Heart left ventricle (tissue), 16 donors: ENCODE measurements at regions of chr6 and their contacts with region 1.

Region 1: DNA sequence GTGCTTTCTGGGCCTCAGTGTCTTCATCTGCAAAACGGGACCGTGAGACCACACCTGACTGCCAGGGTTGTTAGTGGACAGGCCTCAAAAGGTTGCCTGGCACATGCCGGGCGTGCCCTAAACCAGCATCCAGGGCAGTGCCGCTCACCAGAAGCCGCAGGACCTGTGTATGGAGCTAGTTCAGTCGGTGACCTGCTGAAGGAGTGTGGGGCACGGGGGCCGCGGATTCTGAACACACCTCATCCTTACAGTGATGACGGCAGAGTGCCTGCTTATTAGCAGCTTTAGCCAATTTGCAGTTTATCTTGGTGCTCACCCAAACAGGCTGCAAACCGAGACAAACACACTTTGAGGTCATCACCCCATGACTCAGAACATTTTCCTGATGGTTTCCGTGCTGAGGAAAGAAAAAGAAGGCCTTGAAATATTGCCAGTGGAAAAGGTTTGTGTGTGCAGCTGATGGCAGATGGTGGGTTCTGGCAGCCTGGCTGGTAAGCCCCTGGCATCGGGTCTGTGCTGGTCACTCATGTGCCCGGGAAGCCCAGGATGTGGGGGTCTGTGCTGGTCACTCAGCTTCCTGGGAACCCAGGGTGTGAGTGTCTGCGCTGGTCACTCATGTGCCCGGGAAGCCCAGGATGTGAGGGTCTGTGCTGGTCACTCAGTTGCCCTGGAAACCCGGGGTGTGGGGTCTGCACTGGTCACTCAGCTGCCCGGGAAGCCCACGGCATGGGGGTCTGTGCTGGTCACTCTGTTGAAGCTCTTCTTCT is 153.8 kb downstream of the ERMARD start:
- DNase-seq: peak in 3 of 5 donors; percentile 43 to 52 (median 52)
- ATAC-seq: peak; percentile 49 to 89 (median 75)
- H3K4me3 ChIP-seq: no peak overlapping the region
- H3K27ac ChIP-seq: peak overlapping the region in 5 of 12 donors; percentile 20 to 46 (median 34)
- H3K4me1 ChIP-seq: peaks cover 0 to 33% (median 14%) of the 10 kb centered on the region in 12 donors
- H3K27me3 ChIP-seq: no peaks in the 10 kb centered on the region
- CTCF ChIP-seq: no peak
- POLR2A ChIP-seq: no peak

Region 2: GRCh38 chr6:169763308-169763707 is 141.9 kb before region 1 on chr6:
- intact Hi-C with region 1: no loop called
- DNase-seq: peak in 1 of 5 donors; percentile 43
- ATAC-seq: peak; percentile 32 to 70 (median 62)
- H3K4me3 ChIP-seq: no peak overlapping the region
- H3K27ac ChIP-seq: no peak overlapping the region
- H3K4me1 ChIP-seq: no peaks in the 10 kb centered on the region
- H3K27me3 ChIP-seq: no peaks in the 10 kb centered on the region
- CTCF ChIP-seq: no peak
- POLR2A ChIP-seq: no peak

Region 3: GRCh38 chr6:169831450-169832246 is 73.6 kb before region 1 on chr6:
- intact Hi-C with region 1: no loop called
- DNase-seq: peak; percentile 71 to 91 (median 75)
- ATAC-seq: peak; percentile 78 to 92 (median 88)
- H3K4me3 ChIP-seq: no peak overlapping the region
- H3K27ac ChIP-seq: no peak overlapping the region
- H3K4me1 ChIP-seq: peaks cover 0 to 15% (median 5%) of the 10 kb centered on the region in 12 donors
- H3K27me3 ChIP-seq: peaks cover 0 to 20% (median 0%) of the 10 kb centered on the region in 9 donors
- CTCF ChIP-seq: peak; percentile 85 to 97 (median 93)
- POLR2A ChIP-seq: no peak

Region 4: DNA sequence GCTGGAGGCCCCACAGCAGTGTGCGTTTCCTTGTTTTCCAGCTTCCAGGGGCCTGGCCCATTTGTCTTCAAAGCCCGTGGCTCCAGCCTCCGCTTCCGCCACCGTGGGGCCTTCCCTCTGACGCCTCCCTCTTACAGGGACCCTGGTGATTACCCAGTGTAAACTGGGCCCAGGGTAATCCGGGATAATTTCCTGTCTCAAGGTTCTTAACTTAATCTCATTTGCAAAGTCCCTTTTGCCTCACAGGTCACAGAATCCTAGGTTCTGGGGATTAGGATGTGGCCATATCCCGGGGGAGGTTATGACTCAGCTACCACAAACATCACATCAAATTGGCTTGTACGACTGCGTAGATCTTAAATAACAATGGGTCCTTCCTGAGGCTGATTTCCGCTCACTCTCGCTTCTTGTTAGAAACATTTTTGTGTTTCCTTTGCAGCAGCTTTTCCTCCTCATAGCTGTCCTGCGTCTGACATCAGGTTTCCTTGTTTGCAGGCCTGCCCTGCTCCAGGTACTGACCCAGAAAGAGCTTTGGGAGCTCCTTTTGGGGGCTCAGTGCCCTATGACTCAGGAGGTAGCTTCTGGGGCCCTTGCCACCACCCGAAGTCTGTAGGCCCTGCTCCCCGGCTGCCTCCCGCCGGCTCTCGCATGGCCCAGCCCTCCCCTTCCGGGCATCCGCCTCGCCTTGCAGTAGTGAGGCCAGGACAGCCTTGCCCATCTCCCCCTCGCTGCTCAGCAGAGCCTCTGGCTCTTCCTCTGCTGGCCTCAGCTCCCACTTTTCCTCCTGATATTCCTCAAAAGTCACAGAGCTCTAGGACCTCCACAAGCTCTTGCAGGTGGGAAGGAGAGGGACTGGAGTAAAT is 53.4 kb before region 1 on chr6:
- intact Hi-C with region 1: loop called in 5 of 10 experiments (anchors 5 to 10 kb)
- DNase-seq: peak in 4 of 5 donors; percentile 54 to 67 (median 62)
- ATAC-seq: peak; percentile 75 to 94 (median 86)
- H3K4me3 ChIP-seq: no peak overlapping the region
- H3K27ac ChIP-seq: peak overlapping the region; percentile 57 to 91 (median 72)
- H3K4me1 ChIP-seq: peaks cover 0 to 24% (median 11%) of the 10 kb centered on the region in 12 donors
- H3K27me3 ChIP-seq: no peaks in the 10 kb centered on the region
- CTCF ChIP-seq: no peak
- POLR2A ChIP-seq: no peak

Region 5: DNA sequence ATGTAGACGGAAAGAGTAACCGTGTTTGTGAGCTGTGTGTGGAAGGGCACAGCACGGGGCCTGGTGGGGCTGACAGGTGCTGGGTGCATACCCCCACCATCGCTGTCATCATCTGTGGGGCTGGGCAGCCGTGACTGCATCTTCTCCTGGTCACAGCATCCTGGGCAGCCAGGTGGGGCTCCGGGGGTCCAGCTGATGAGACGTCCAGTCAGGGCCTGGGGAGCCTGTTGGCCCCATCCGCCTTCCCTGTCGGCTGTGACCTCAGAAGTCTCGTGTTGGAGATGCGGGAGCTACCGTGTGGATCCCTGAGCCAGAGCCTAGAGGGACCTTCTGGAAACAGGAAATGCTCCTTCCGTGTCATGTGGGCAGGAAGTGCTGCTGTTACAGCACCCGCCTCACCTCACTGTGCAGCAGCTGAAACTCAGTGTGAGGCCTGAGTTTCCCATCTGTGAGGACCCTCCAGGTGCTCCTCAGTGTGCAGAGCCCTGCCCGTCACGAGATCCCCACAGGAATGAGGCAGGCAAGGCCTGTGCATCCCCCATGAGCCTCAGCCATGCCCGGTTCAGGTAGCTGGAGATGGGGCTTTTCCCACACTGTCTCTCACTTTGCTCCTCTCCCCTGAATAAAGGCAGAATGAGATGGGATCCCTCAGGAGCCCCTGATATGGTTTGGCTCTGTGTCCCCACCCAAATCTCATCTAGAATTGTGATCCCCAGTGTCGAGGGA is 45.1 kb before region 1 on chr6:
- intact Hi-C with region 1: loop called in 2 of 10 experiments (anchors 2 to 10 kb)
- DNase-seq: peak in 2 of 5 donors; percentile 32 to 39
- ATAC-seq: peak in 3 of 4 donors; percentile 55 to 92 (median 57)
- H3K4me3 ChIP-seq: no peak overlapping the region
- H3K27ac ChIP-seq: peak overlapping the region in 6 of 12 donors; percentile 14 to 70 (median 44)
- H3K4me1 ChIP-seq: peaks cover 0 to 25% (median 8%) of the 10 kb centered on the region in 12 donors
- H3K27me3 ChIP-seq: no peaks in the 10 kb centered on the region
- CTCF ChIP-seq: no peak
- POLR2A ChIP-seq: no peak